ENCODE measurements at regions of chr6 and their contacts with region 1.

Region 1: GRCh38 chr6:63352587-63353285 is 33.0 kb upstream of the LGSN start:
- DNase-seq: peak; percentile 52
- H3K4me3 Mint-ChIP-seq: peak overlapping the region; percentile 40
- H3K27ac Mint-ChIP-seq: peak overlapping the region; percentile 67
- H3K4me1 Mint-ChIP-seq: peaks cover 45% of the 10 kb centered on the region
- H3K27me3 Mint-ChIP-seq: no peaks in the 10 kb centered on the region
- CTCF ChIP-seq: peak; percentile 49

Region 2: DNA sequence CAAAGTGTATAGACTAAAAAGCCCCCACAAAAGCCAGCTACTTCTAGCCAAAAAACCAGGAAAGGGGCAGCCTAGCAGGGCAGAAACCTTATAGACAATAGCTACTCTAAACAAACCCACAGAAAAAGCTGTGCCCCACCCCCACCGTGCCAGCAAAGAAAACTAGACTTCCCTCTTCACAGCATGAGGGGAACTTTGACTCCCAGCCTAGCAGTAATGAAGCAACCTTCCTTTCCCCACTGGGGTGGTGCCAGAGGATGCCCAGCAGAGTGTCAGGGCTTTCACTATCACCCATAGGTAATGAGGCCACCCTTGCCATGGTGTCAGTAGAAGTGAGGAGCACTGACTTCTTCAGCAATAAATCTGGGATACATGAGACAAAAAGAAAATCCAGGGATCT is 66.0 kb after region 1 on chr6:
- CTCF ChIA-PET with region 1: no interaction called
- intact Hi-C with region 1: no loop called
- DNase-seq: no peak
- H3K4me3 Mint-ChIP-seq: no peak overlapping the region
- H3K27ac Mint-ChIP-seq: no peak overlapping the region
- H3K4me1 Mint-ChIP-seq: no peaks in the 10 kb centered on the region
- H3K27me3 Mint-ChIP-seq: no peaks in the 10 kb centered on the region
- CTCF ChIP-seq: no peak

Region 3: GRCh38 chr6:63458480-63459115 is 105.9 kb after region 1 on chr6:
- CTCF ChIA-PET with region 1: no interaction called
- intact Hi-C with region 1: loop called (anchors 5 kb)
- DNase-seq: no peak
- H3K4me3 Mint-ChIP-seq: no peak overlapping the region
- H3K27ac Mint-ChIP-seq: peak overlapping the region; percentile 84
- H3K4me1 Mint-ChIP-seq: peaks cover 13% of the 10 kb centered on the region
- H3K27me3 Mint-ChIP-seq: no peaks in the 10 kb centered on the region
- CTCF ChIP-seq: no peak

Region 4: GRCh38 chr6:63571881-63572732 is 219.4 kb after region 1 on chr6 and contains the starts of genes LOC128125822 and PTP4A1:
- CTCF ChIA-PET with region 1: interaction called, 20 read pairs
- intact Hi-C with region 1: loop called (anchors 1 kb)
- DNase-seq: peak; percentile 97
- H3K4me3 Mint-ChIP-seq: peak within 1 kb of the TSS; percentile 88
- H3K27ac Mint-ChIP-seq: peak within 1 kb of the TSS; percentile 95
- H3K4me1 Mint-ChIP-seq: peaks cover 11% of the 10 kb centered on the region
- H3K27me3 Mint-ChIP-seq: no peaks in the 10 kb centered on the region
- CTCF ChIP-seq: no peak
- total RNA-seq, gene PTP4A1: 97.3 and 110 TPM in 2 replicates

Region 5: GRCh38 chr6:63598049-63599036 is 245.6 kb after region 1 on chr6:
- CTCF ChIA-PET with region 1: interaction called, 22 read pairs
- intact Hi-C with region 1: loop called (anchors 1 kb)
- DNase-seq: peak; percentile 76
- H3K4me3 Mint-ChIP-seq: peak overlapping the region; percentile 75
- H3K27ac Mint-ChIP-seq: peak overlapping the region; percentile 48
- H3K4me1 Mint-ChIP-seq: peaks cover 8% of the 10 kb centered on the region
- H3K27me3 Mint-ChIP-seq: no peaks in the 10 kb centered on the region
- CTCF ChIP-seq: peak; percentile 79

Region 6: DNA sequence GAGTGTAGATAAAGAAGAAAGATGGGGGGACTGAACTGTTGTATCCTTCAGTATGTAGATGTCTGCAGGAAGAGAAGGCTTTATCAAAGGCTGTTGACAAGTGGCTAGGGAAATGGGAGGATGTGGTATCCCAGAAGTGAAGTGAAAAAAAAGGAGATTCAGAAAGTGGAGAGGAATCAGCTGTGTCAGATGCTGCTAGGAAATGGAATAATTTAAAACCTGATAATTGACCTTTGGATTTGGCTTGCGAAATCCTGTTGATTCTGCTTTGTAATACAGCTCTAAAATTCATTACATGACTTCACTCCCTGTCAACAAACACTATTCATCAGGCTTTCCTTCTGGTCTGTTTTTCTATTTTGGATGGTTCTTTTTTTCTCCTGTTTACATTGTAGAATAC is 324.5 kb after region 1 on chr6:
- CTCF ChIA-PET with region 1: no interaction called
- intact Hi-C with region 1: loop called (anchors 10 kb)
- DNase-seq: no peak
- H3K4me3 Mint-ChIP-seq: no peak overlapping the region
- H3K27ac Mint-ChIP-seq: no peak overlapping the region
- H3K4me1 Mint-ChIP-seq: peaks cover 9% of the 10 kb centered on the region
- H3K27me3 Mint-ChIP-seq: no peaks in the 10 kb centered on the region
- CTCF ChIP-seq: no peak

Region 7: DNA sequence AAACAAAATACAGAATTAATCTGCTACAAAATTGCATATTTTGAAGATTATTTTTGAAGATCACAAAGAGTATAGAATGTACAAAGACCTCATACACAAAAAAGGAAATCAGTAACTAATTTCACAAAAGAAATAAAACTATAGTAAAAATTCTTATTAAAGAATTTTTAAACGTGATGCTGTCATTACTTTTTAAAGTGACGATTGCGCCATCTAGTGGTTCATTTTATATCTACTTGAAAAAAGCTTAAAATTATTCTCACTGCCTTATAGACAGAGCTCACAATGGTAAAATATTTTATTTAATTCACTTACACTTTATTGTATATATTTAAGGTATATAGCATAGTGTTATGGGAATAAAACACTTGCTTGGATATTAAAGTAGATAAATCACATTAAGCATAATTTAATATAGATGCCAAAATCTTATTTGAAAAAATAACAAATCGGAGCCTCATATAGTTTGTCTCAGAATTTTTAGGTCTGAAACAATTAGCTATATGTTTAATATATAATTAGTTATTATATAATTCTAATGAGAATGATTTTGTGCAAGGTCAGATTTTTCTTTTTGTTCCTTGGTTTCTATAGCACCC is 411.7 kb after region 1 on chr6:
- CTCF ChIA-PET with region 1: interaction called, 21 read pairs
- intact Hi-C with region 1: loop called (anchors 1 kb)
- DNase-seq: no peak
- H3K4me3 Mint-ChIP-seq: no peak overlapping the region
- H3K27ac Mint-ChIP-seq: no peak overlapping the region
- H3K4me1 Mint-ChIP-seq: no peaks in the 10 kb centered on the region
- H3K27me3 Mint-ChIP-seq: no peaks in the 10 kb centered on the region
- CTCF ChIP-seq: peak; percentile 46

Region 8: GRCh38 chr6:63802606-63803206 is 450.0 kb after region 1 on chr6:
- CTCF ChIA-PET with region 1: interaction called, 26 read pairs
- intact Hi-C with region 1: loop called (anchors 2 kb)
- DNase-seq: peak; percentile 6
- H3K4me3 Mint-ChIP-seq: no peak overlapping the region
- H3K27ac Mint-ChIP-seq: no peak overlapping the region
- H3K4me1 Mint-ChIP-seq: peaks cover 54% of the 10 kb centered on the region
- H3K27me3 Mint-ChIP-seq: no peaks in the 10 kb centered on the region
- CTCF ChIP-seq: no peak

Measured in Calu3 (cell line).